Mammary epithelial cell (primary cell): ENCODE measurements at regions of chr2 and their contacts with region 1.

Region 1: DNA sequence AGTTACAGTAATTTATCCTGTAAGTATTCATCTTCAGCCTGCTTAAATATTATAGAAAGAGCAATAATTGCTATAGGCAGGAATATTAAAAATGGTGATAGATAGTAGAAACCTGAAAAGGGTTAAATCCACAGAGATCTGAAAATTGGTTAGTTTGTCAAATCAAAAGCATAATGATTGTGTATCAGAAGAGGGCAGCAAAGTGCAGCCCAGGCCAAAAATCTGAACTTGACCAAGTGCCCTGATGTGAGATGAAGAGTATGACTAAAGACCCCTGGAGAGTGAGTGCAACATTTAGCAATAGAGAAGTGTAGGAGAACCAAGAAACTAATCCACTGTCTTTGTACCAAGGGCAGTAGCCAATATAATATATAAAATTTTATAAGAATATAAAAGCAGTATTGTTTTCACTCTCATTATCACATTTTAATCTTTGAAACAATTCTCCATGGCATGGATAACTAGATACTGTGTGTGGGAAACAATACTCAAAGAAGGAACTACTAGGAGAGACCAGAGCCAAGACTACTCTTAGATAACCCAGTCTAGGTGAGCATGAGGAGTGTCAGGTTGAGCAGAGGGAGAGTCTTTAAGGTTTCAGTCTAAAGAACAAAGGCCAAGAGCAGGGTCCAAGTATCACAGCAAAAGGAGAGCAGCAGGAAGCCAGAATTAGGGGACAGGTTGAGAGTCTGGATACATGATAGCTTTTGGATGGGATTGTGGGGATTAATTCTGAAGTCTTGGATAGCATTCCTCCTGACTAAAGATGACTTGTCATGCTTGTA is 148.7 kb downstream of the CALCRL start:
- DNase-seq: no peak
- H3K4me3 ChIP-seq: no peak overlapping the region
- H3K27ac ChIP-seq: no peak overlapping the region
- H3K4me1 ChIP-seq: no peaks in the 10 kb centered on the region
- H3K27me3 ChIP-seq: no peaks in the 10 kb centered on the region
- CTCF ChIP-seq: peak; percentile 20 to 59

Region 2: DNA sequence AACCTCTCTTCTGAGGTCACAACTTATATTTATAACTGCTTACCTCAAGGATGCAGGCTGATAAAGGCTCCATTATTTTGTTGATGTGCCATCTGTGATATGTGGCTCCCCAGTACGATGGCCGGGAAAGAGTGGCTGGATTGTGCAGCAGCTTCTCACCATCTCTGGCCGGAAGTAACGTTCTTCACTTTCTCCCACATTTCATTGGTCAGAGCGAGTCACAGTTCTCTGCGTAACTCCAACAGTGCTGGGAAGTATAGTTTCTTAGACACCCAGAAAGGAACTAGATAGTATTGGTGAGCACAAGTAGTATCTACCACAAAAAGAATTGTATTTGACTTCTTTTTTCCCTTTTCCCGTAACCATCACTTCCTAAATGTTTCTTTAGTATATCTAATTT is 479.0 kb before region 1 on chr2:
- CTCF ChIA-PET with region 1: no interaction called
- dilution Hi-C with region 1: no loop called
- in situ Hi-C with region 1: no loop called
- intact Hi-C with region 1: no loop called
- DNase-seq: no peak
- H3K4me3 ChIP-seq: no peak overlapping the region
- H3K27ac ChIP-seq: no peak overlapping the region
- H3K4me1 ChIP-seq: no peaks in the 10 kb centered on the region
- H3K27me3 ChIP-seq: no peaks in the 10 kb centered on the region
- CTCF ChIP-seq: no peak

Region 3: GRCh38 chr2:186862869-186863709 is 436.2 kb before region 1 on chr2:
- CTCF ChIA-PET with region 1: no interaction called
- dilution Hi-C with region 1: no loop called
- in situ Hi-C with region 1: no loop called
- intact Hi-C with region 1: loop called (anchors 1 kb)
- DNase-seq: peak; percentile 17
- H3K4me3 ChIP-seq: no peak overlapping the region
- H3K27ac ChIP-seq: no peak overlapping the region
- H3K4me1 ChIP-seq: no peaks in the 10 kb centered on the region
- H3K27me3 ChIP-seq: no peaks in the 10 kb centered on the region
- CTCF ChIP-seq: peak; percentile 64 to 70

Region 4: GRCh38 chr2:186903216-186903615 is 396.1 kb before region 1 on chr2:
- CTCF ChIA-PET with region 1: no interaction called
- dilution Hi-C with region 1: no loop called
- in situ Hi-C with region 1: no loop called
- intact Hi-C with region 1: loop called (anchors 10 kb)
- DNase-seq: no peak
- H3K4me3 ChIP-seq: no peak overlapping the region
- H3K27ac ChIP-seq: no peak overlapping the region
- H3K4me1 ChIP-seq: no peaks in the 10 kb centered on the region
- H3K27me3 ChIP-seq: no peaks in the 10 kb centered on the region
- CTCF ChIP-seq: peak; percentile 32 to 44

Region 5: GRCh38 chr2:187338679-187339121 is 39.4 kb after region 1 on chr2:
- CTCF ChIA-PET with region 1: no interaction called
- dilution Hi-C with region 1: no loop called
- in situ Hi-C with region 1: no loop called
- intact Hi-C with region 1: no loop called
- DNase-seq: no peak
- H3K4me3 ChIP-seq: no peak overlapping the region
- H3K27ac ChIP-seq: no peak overlapping the region
- H3K4me1 ChIP-seq: no peaks in the 10 kb centered on the region
- H3K27me3 ChIP-seq: no peaks in the 10 kb centered on the region
- CTCF ChIP-seq: no peak

Region 6: DNA sequence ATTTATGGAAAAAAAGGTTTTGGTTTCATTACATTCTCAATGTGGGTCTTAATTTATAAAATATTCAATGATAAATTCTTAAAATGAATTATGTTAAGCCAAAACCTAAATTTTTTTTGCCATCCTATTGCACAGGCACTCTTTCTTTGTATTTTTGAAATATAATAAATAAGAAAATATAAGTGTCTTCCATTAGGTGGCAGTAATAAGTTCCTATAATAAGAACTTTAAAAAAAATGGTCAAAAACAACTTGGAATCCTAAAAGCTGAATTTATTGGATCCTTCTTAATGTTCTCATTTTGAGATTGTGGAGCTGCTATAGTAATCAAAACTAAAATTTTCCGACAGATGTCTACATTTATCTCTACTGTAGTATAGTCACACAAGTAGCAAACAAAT is 143.1 kb after region 1 on chr2:
- CTCF ChIA-PET with region 1: no interaction called
- dilution Hi-C with region 1: no loop called
- in situ Hi-C with region 1: loop called in 1 of 2 experiments (anchors 10 kb)
- intact Hi-C with region 1: no loop called
- DNase-seq: no peak
- H3K4me3 ChIP-seq: no peak overlapping the region
- H3K27ac ChIP-seq: no peak overlapping the region
- H3K4me1 ChIP-seq: no peaks in the 10 kb centered on the region
- H3K27me3 ChIP-seq: no peaks in the 10 kb centered on the region
- CTCF ChIP-seq: peak in 1 of 2 donors; percentile 22